Left ventricle myocardium inferior (tissue), 1 donor: ENCODE measurements at regions of chr15 and their contacts with region 1.

Region 1: GRCh38 chr15:54428596-54428995 is 450.4 kb downstream of the UNC13C start:
- DNase-seq: no peak
- H3K4me3 ChIP-seq: no peak overlapping the region
- H3K27ac ChIP-seq: no peak overlapping the region
- H3K4me1 ChIP-seq: no peaks in the 10 kb centered on the region
- H3K27me3 ChIP-seq: no peaks in the 10 kb centered on the region
- CTCF ChIP-seq: no peak

Region 2: GRCh38 chr15:54502416-54503075 is 74.0 kb after region 1 on chr15:
- intact Hi-C with region 1: loop called (anchors 10 kb)
- DNase-seq: no peak
- H3K4me3 ChIP-seq: no peak overlapping the region
- H3K27ac ChIP-seq: no peak overlapping the region
- H3K4me1 ChIP-seq: no peaks in the 10 kb centered on the region
- H3K27me3 ChIP-seq: no peaks in the 10 kb centered on the region
- CTCF ChIP-seq: no peak

Region 3: DNA sequence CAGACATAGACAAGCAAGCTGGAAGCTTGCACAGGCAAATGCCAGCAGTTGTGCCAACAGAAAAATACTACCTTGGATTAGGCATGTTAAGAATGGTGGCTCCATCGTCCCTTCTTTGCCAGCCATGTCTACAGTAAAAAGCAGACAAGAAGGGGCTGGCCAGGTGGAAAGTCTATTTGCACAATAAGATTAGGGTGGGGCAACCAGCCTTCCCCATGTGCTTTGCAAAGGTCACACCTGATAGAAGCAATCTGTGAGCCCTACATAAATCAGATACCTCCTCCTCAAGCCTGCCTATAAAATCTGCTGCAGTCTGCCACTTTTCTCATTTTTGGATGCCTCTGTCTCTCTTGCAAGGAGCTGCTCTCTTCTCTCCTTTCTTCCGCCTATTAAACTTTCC is 212.3 kb after region 1 on chr15:
- intact Hi-C with region 1: no loop called
- DNase-seq: no peak
- H3K4me3 ChIP-seq: no peak overlapping the region
- H3K27ac ChIP-seq: no peak overlapping the region
- H3K4me1 ChIP-seq: no peaks in the 10 kb centered on the region
- H3K27me3 ChIP-seq: no peaks in the 10 kb centered on the region
- CTCF ChIP-seq: no peak

Region 4: GRCh38 chr15:54660356-54660755 is 231.8 kb after region 1 on chr15:
- intact Hi-C with region 1: no loop called
- DNase-seq: no peak
- H3K4me3 ChIP-seq: no peak overlapping the region
- H3K27ac ChIP-seq: no peak overlapping the region
- H3K4me1 ChIP-seq: no peaks in the 10 kb centered on the region
- H3K27me3 ChIP-seq: no peaks in the 10 kb centered on the region
- CTCF ChIP-seq: no peak